ENCODE measurements at regions of chr17 and their contacts with region 1.

Region 1: GRCh38 chr17:38735161-38735997 is 5.2 kb downstream of the CISD3 start:
- DNase-seq: no peak
- H3K4me3 ChIP-seq: no peak overlapping the region
- H3K27ac ChIP-seq: peak overlapping the region; percentile 48 to 58
- H3K4me1 ChIP-seq: peaks cover 2 to 19% of the 10 kb centered on the region in 2 donors
- H3K27me3 ChIP-seq: no peaks in the 10 kb centered on the region
- CTCF ChIP-seq: peak; percentile 90 to 96 (median 94)
- POLR2A ChIP-seq: no peak

Region 2: DNA sequence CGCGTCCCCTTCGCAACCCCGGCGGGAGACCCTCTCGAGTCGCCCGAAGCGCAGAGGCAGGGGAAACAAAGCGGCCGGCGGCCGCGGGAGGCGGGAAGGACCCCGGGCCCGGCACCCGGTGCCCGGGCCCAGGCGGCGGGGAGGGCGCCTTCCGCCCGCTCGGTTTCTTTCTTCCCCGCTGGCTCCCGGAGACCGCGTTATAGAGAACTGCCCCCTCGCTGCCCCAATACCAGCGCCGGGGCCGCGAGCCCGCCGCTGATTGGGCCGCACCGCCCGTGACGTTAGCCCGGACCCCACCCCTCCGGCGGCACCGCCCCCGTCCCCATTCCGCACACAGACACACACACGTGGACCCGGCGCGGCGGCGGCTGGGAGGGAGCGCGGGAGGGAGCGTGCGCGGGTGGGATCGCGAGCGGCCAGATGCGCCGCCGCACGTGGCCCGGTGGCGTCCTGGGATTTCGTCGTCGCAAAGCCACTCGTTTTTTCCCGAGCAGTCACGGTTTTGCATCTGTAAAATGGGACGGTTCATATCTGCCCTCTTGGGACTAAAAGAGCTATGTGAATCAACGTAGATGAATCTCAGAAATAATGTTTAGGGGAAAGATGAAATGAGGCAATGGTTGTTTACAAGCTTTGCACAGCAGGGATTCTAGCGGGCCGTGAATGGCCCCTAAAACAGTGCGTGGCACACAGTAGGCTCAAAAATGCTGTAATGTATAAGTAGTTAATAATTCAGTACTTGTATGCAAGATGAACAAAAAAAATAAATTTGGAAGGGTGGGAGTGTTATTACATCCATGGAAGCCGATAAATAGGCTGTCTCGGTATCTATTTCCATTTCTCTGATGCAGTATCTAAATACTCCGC is 60.4 kb before region 1 on chr17 and contains the start of gene EPOP:
- intact Hi-C with region 1: loop called (anchors 5 kb)
- DNase-seq: peak; percentile 85
- H3K4me3 ChIP-seq: peak within 1 kb of the TSS; percentile 63 to 68 (median 67)
- H3K27ac ChIP-seq: peak within 1 kb of the TSS; percentile 14 to 64
- H3K4me1 ChIP-seq: peaks cover 0 to 6% of the 10 kb centered on the region in 2 donors
- H3K27me3 ChIP-seq: peaks cover 3 to 4% of the 10 kb centered on the region in 2 donors
- CTCF ChIP-seq: no peak
- POLR2A ChIP-seq: no peak
- total RNA-seq, gene EPOP: 2.0 to 2.1 (median 2.0) TPM

Region 3: GRCh38 chr17:38777641-38778250 is 42.4 kb after region 1 on chr17:
- intact Hi-C with region 1: loop called (anchors 1 kb)
- DNase-seq: no peak
- H3K4me3 ChIP-seq: no peak overlapping the region
- H3K27ac ChIP-seq: no peak overlapping the region
- H3K4me1 ChIP-seq: no peaks in the 10 kb centered on the region
- H3K27me3 ChIP-seq: no peaks in the 10 kb centered on the region
- CTCF ChIP-seq: no peak
- POLR2A ChIP-seq: no peak

Measured in breast epithelium (tissue), 4 donors.